HEK293 (cell line): ENCODE measurements at regions of chr2 and their contacts with region 1.

Region 1: GRCh38 chr2:135004005-135004746 is 43.1 kb downstream of the MAP3K19 start:
- H3K4me3 ChIP-seq: no peak overlapping the region
- H3K27ac ChIP-seq: no peak overlapping the region
- H3K4me1 ChIP-seq: no peaks in the 10 kb centered on the region
- CTCF ChIP-seq: peak; percentile 82

Region 2: GRCh38 chr2:134927195-134927594 is 77.0 kb before region 1 on chr2:
- CTCF ChIA-PET with region 1: no interaction called
- POLR2A ChIA-PET with region 1: no interaction called
- H3K4me3 ChIP-seq: no peak overlapping the region
- H3K27ac ChIP-seq: no peak overlapping the region
- H3K4me1 ChIP-seq: peaks cover 5% of the 10 kb centered on the region; the same call in 1 of the 2 replicates
- CTCF ChIP-seq: no peak

Region 3: DNA sequence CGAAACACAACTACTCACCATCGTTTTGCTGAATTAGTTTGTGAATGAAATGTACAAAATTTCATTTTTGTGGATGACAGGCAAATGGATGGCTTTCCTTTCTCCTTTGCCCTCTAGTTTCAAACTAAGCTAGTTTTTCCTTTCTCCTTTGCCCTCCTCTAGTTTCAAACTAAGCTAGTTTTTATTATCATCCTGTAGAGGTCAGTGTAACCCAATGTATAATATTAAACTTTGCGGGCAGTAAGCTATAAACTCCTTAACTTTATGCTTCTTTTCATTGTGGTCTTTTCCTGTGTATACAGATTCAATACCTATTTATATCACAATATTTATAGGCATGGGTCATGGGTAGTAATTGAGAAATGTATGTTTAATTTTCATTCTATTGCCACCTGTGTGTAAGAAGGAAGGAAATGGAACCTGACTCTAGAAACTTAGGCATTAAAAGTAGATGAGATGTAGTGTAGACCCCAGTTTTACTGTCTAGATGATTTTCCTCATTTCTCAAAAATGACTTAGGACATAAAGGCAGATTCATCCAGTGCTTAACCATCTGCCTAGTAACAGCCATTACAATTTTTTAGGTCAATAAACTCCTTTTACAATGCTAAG is 15.1 kb before region 1 on chr2:
- CTCF ChIA-PET with region 1: interaction called, 22 read pairs
- POLR2A ChIA-PET with region 1: no interaction called
- H3K4me3 ChIP-seq: no peak overlapping the region
- H3K27ac ChIP-seq: no peak overlapping the region
- H3K4me1 ChIP-seq: no peaks in the 10 kb centered on the region
- CTCF ChIP-seq: no peak; the same call in 1 of the 2 replicates

Region 4: GRCh38 chr2:135022952-135023880 is 19.0 kb after region 1 on chr2:
- CTCF ChIA-PET with region 1: interaction called, 13 read pairs
- POLR2A ChIA-PET with region 1: no interaction called
- H3K4me3 ChIP-seq: no peak overlapping the region
- H3K27ac ChIP-seq: no peak overlapping the region
- H3K4me1 ChIP-seq: no peaks in the 10 kb centered on the region
- CTCF ChIP-seq: no peak

Region 5: GRCh38 chr2:135600915-135601314 is 596.7 kb after region 1 on chr2:
- CTCF ChIA-PET with region 1: interaction called, 12 read pairs
- POLR2A ChIA-PET with region 1: no interaction called
- H3K4me3 ChIP-seq: no peak overlapping the region
- H3K27ac ChIP-seq: no peak overlapping the region
- H3K4me1 ChIP-seq: 0 out of 2 replicates have a peak, but pooled peaks cover 3% of the 10 kb centered on the region
- CTCF ChIP-seq: no peak

Region 6: GRCh38 chr2:135709992-135710391 is 705.8 kb after region 1 on chr2:
- CTCF ChIA-PET with region 1: interaction called, 90 read pairs
- POLR2A ChIA-PET with region 1: interaction called, 3 read pairs
- H3K4me3 ChIP-seq: no peak overlapping the region
- H3K27ac ChIP-seq: no peak overlapping the region
- H3K4me1 ChIP-seq: no peaks in the 10 kb centered on the region; the same call in 1 of the 2 replicates
- CTCF ChIP-seq: peak; percentile 71